ENCODE measurements at regions of chr3 and their contacts with region 1.

Region 1: GRCh38 chr3:42600111-42600988 is at the start of gene NKTR:
- DNase-seq: peak; percentile 98 to 100 (median 99)
- ATAC-seq: peak; percentile 90 to 98 (median 92)
- H3K4me3 ChIP-seq: peak within 1 kb of the TSS; percentile 86 to 95
- H3K4me3 Mint-ChIP-seq: peak within 1 kb of the TSS; percentile 93 to 95 (median 94)
- H3K27ac ChIP-seq: peak within 1 kb of the TSS; percentile 86
- H3K27ac Mint-ChIP-seq: peak within 1 kb of the TSS; percentile 96 to 99
- H3K4me1 ChIP-seq: peaks cover 13 to 19% of the 10 kb centered on the region in 2 experiments
- H3K4me1 Mint-ChIP-seq: peaks cover 37 to 45% (median 43%) of the 10 kb centered on the region in 3 donors
- H3K27me3 ChIP-seq: no peaks in the 10 kb centered on the region
- H3K27me3 Mint-ChIP-seq: no peaks in the 10 kb centered on the region
- total RNA-seq, gene NKTR: 185 to 252 (median 209) TPM

Region 2: DNA sequence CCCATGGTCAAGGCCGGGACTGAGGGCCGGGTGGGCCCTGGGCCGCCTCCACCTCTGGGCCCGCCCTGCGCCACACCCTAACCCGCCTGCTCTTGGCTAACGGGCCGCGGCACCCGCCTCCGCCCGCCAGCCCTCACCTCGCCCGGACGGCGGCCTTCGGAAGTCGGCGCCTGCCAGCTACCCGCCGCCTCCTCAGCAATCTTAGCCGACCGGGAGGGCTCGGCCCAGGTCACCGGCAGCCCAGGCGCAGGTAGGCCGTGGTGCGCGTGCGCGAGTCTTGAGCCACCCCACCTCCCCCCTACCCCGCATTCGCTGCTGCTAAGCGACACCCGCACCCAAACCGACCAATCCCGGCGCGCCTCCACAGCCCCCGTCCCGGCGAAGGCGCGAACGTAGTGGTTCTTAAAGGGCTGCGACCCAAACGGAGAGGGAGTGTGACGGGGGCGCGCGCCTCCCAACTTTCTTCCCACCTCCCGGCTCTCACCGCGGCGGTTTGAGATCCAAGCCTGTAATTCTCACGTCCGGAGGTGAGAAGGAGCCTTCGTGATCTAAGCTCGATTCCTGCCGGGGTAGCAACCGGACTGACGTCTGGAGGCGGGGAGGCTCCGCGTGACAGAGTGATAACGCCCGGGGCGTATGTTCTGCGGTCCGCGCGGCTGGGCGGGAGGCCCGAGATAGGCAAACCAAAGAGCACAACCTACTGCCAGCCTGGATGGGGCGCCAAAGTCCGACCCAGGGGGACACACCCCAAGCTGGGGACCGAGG is 18.5 kb before region 1 on chr3 and contains the start of gene SEC22C:
- CTCF ChIA-PET with region 1: interaction called in 1 of 2 experiments, 17 read pairs
- POLR2A ChIA-PET with region 1: interaction called, 5 to 13 read pairs
- DNase-seq: peak; percentile 88 to 96 (median 92)
- ATAC-seq: peak; percentile 90 to 95 (median 93)
- H3K4me3 ChIP-seq: peak within 1 kb of the TSS; percentile 48 to 83
- H3K4me3 Mint-ChIP-seq: peak within 1 kb of the TSS; percentile 86 to 92 (median 88)
- H3K27ac ChIP-seq: peak within 1 kb of the TSS; percentile 93
- H3K27ac Mint-ChIP-seq: peak within 1 kb of the TSS; percentile 91 to 97
- H3K4me1 ChIP-seq: peaks cover 15 to 19% of the 10 kb centered on the region in 2 experiments
- H3K4me1 Mint-ChIP-seq: peaks cover 48 to 52% (median 50%) of the 10 kb centered on the region in 3 donors
- H3K27me3 ChIP-seq: no peaks in the 10 kb centered on the region
- H3K27me3 Mint-ChIP-seq: no peaks in the 10 kb centered on the region
- total RNA-seq, gene SEC22C: 50.1 to 71.2 (median 53.6) TPM

Region 3: DNA sequence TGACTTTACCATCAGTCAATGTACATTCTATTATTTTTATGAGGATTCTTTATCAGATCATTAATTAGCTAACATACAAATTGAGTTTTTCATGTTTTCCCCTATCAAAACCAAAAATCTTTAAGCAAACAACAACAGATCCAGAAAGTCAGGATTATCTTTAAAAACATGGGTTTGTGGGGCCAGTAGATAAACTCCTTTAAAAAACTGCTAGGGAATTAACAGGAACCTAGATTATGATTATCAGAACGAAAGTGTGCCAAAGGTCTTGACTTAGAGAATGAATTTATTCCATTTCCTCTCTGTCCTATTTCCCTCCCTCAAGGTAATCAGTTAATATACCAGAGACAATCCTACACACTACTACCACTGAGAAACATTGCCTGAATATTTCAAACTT is 185.9 kb after region 1 on chr3:
- CTCF ChIA-PET with region 1: no interaction called
- POLR2A ChIA-PET with region 1: no interaction called
- DNase-seq: no peak
- ATAC-seq: no peak
- H3K4me3 ChIP-seq: no peak overlapping the region
- H3K4me3 Mint-ChIP-seq: no peak overlapping the region
- H3K27ac ChIP-seq: no peak overlapping the region
- H3K27ac Mint-ChIP-seq: no peak overlapping the region
- H3K4me1 ChIP-seq: peaks cover 0 to 2% of the 10 kb centered on the region in 2 experiments
- H3K4me1 Mint-ChIP-seq: peaks cover 0 to 6% (median 4%) of the 10 kb centered on the region in 3 donors
- H3K27me3 ChIP-seq: no peaks in the 10 kb centered on the region
- H3K27me3 Mint-ChIP-seq: no peaks in the 10 kb centered on the region

Measured in T-cell (primary cell).